AG04450 (cell line): ENCODE measurements at regions of chr5 and their contacts with region 1.

Region 1: DNA sequence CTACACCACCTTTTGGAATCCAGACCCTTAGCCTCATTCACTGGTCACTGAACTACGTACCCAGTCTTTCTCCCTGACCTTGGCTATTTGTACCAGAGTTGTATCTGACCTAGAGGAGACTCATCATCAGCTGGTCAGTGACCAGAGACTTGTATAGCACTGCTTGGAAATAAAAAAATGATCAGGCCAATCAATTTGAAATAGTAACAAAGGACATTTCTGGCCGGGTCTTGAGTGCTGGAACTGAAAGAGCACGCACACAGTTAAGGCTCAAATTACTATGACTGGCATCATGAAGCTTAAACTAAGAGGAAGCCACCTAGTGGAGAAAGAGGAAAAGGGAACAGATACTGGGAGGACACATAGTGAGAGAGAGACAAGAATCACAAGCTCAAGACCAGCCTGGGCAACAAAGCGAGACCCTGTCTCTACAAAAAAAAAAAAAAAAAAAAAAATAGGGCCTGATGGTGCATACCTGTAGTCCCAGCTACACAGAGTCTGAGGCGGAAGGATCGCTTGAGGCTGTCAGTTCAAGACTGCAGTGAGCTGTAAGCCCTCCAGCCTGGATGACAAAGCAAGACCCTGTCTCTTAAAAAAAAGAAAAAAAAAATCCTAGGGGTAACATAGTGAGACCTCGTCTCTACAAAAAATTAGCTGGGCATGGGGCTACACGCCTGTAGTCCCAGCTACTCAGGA is 12.8 kb upstream of the SRP19 start:
- DNase-seq: peak; percentile 32
- H3K4me3 ChIP-seq: no peak overlapping the region
- H3K27ac ChIP-seq: peak overlapping the region; percentile 42
- H3K27me3 ChIP-seq: no peaks in the 10 kb centered on the region
- CTCF ChIP-seq: peak; percentile 76

Region 2: DNA sequence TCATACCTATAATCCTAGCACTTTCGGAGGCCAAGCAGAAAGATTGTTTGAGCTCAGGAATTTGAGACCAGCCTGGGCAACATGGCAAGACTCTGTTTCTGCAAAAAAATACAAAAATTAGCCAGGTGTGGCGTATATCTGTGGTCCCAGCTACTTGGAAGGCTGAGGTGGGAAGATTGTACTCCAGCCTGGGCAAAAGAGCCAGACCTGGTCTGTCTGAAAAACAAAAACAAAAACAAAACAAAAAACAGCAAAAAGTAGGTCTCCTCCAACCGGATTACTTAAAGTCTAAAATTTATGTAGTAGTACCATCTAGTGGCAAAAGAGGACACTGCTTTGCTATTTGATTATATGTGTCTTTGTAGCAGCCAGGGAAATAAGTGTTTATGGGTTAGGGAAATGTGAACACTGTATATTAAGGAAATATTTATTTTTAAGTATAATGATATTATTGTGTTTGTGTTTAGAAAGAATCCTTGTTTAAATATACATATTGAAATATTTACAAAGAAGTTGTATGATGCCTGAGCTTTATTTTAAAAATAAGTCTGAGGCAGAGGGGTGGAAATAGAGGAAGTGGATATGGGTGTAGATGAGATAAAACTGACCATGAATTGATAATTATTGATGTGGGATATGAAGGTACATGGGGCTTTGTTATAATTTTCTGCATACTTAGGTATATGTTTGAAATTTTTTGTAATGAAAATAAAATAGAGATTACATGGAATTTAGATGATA is 90.6 kb before region 1 on chr5:
- CTCF ChIA-PET with region 1: interaction called, 13 read pairs
- POLR2A ChIA-PET with region 1: no interaction called
- DNase-seq: no peak
- H3K4me3 ChIP-seq: no peak overlapping the region
- H3K27ac ChIP-seq: no peak overlapping the region
- H3K27me3 ChIP-seq: no peaks in the 10 kb centered on the region
- CTCF ChIP-seq: peak; percentile 74

Region 3: GRCh38 chr5:112787261-112787660 is 61.0 kb before region 1 on chr5:
- CTCF ChIA-PET with region 1: interaction called, 13 read pairs
- POLR2A ChIA-PET with region 1: no interaction called
- DNase-seq: no peak
- H3K4me3 ChIP-seq: no peak overlapping the region
- H3K27ac ChIP-seq: peak overlapping the region; percentile 63
- H3K27me3 ChIP-seq: no peaks in the 10 kb centered on the region
- CTCF ChIP-seq: no peak

Region 4: DNA sequence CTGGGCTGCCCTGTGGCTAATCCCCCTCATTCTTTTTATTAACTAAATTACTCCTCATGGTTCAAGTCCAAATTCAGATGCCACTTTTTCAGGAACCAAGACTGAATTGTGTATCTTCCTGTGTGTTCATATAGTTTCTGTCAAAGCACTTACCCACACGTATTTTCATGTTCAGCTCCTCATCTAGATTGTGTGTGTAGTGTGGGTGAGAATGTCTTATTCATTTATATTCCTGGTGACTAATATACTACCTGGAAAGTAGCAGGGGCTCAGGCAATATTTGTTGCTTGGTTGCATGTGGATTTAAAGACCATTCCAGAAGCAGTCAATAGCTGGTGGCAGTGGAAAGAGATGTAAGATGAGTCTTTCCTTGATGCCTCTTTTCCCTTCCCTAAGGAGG is 35.7 kb before region 1 on chr5:
- CTCF ChIA-PET with region 1: interaction called, 11 read pairs
- POLR2A ChIA-PET with region 1: no interaction called
- DNase-seq: no peak
- H3K4me3 ChIP-seq: no peak overlapping the region
- H3K27ac ChIP-seq: no peak overlapping the region
- H3K27me3 ChIP-seq: no peaks in the 10 kb centered on the region
- CTCF ChIP-seq: no peak

Region 5: DNA sequence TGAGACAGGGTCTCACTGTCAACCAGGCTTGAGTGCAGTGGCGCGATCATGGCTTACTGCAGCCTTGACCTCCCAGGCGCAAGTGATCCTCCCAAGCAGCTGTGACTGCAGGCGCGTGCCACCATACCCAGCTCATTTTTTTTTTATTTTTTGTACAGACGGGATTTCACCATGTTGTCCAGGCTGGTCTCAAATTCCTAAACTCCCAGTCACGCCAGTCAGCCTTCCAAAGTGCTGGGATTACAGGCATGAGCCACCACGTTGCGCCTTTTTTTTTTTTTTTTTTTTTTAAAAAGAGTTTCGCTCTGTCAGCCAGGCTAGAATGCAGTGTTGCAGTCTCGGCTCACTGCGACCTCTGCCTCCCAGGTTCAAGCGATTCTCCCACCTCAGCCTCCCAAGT is 14.3 kb before region 1 on chr5:
- CTCF ChIA-PET with region 1: interaction called, 30 read pairs
- POLR2A ChIA-PET with region 1: no interaction called
- DNase-seq: no peak
- H3K4me3 ChIP-seq: no peak overlapping the region
- H3K27ac ChIP-seq: no peak overlapping the region
- H3K27me3 ChIP-seq: no peaks in the 10 kb centered on the region
- CTCF ChIP-seq: no peak

Region 6: DNA sequence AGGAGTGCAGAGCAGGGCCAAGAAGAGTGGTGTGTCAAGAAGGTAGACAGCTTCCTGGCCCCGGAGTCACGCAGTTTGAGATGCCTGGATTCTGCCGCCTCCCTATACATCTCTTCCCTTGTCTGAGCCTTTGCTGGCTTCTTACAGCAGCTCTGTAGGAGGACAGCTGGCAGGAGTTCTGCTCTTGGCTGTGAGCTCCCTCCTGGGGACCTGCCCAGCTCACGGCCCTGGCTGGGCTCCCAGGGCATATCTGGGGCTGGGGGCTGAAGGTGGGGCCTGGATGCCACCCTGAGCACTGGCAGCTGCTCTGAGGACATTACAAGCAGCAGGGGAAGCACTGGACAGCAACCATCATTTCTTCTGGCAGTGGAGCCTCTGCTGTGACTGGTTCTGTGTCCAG is 587.3 kb after region 1 on chr5:
- CTCF ChIA-PET with region 1: no interaction called
- POLR2A ChIA-PET with region 1: no interaction called
- DNase-seq: no peak
- H3K4me3 ChIP-seq: no peak overlapping the region
- H3K27ac ChIP-seq: no peak overlapping the region
- H3K27me3 ChIP-seq: peaks cover 3% of the 10 kb centered on the region
- CTCF ChIP-seq: no peak